Activated CD4-positive, alpha-beta memory T cell treated with anti-CD3 and anti-CD28 coated beads, Interleukin-2, amount 10 ng/mL, durations not matched to agents 7 days and 5 days (primary cell): ENCODE measurements at regions of chr3 and their contacts with region 1.

Region 1: GRCh38 chr3:10242182-10243065 is 5.8 kb upstream of the TATDN2 start:
- DNase-seq: peak; percentile 89
- H3K4me3 Mint-ChIP-seq: peak overlapping the region; percentile 39
- H3K27ac Mint-ChIP-seq: peak overlapping the region; percentile 95
- H3K4me1 Mint-ChIP-seq: peaks cover 62% of the 10 kb centered on the region
- H3K27me3 Mint-ChIP-seq: no peaks in the 10 kb centered on the region

Region 2: GRCh38 chr3:9615003-9615625 is 627.3 kb before region 1 on chr3:
- CTCF ChIA-PET with region 1: no interaction called
- POLR2A ChIA-PET with region 1: no interaction called
- DNase-seq: no peak
- H3K4me3 Mint-ChIP-seq: no peak overlapping the region
- H3K27ac Mint-ChIP-seq: no peak overlapping the region
- H3K4me1 Mint-ChIP-seq: no peaks in the 10 kb centered on the region
- H3K27me3 Mint-ChIP-seq: peaks cover 8% of the 10 kb centered on the region

Region 3: GRCh38 chr3:10122724-10123123 is 119.7 kb before region 1 on chr3:
- CTCF ChIA-PET with region 1: no interaction called
- POLR2A ChIA-PET with region 1: no interaction called
- DNase-seq: no peak
- H3K4me3 Mint-ChIP-seq: no peak overlapping the region
- H3K27ac Mint-ChIP-seq: peak overlapping the region; percentile 1
- H3K4me1 Mint-ChIP-seq: peaks cover 41% of the 10 kb centered on the region
- H3K27me3 Mint-ChIP-seq: no peaks in the 10 kb centered on the region

Region 4: DNA sequence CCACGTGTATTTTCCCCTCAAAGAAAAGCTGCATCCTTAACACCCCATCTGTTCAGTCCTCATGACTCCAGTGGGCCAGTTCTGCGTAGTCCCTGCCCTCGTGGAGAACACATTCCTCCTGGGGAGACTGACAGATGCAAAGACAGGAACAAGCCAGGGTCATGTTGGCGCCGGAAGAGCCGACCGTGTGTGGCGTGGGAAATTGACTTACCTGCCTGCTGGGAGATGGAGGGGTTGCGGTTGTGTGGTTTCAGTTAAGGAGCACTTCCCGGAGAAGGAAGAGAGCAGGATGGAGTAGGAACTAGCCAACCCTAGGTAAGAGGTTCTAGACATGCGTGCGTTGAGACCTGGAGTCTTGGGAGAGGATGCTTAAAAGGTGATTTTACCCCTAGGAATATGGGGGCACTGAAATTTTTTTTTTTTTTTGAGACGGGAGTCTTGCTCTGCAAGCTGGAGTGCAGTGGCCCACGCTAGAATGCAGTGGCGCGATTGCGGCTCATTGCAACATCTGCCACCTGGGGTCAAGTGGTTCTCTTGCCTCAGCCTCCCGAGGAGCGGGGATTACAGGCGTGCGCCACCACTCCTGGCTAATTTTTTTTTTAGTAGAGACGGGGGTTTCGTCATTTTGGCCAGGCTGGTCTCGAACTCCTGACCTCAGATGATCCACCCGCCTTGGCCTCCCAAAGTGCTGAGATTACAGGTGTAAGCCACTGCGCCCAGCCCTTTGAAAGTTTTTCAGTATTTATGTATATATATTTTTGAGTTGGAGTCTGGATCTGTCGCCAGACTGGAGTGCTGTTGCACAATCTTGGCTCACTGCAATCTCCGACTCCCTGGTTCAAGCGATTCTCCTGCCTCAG is 99.5 kb before region 1 on chr3:
- CTCF ChIA-PET with region 1: no interaction called
- POLR2A ChIA-PET with region 1: interaction called, 14 read pairs
- DNase-seq: peak; percentile 32
- H3K4me3 Mint-ChIP-seq: peak overlapping the region; percentile 85
- H3K27ac Mint-ChIP-seq: peak overlapping the region; percentile 96
- H3K4me1 Mint-ChIP-seq: peaks cover 42% of the 10 kb centered on the region
- H3K27me3 Mint-ChIP-seq: no peaks in the 10 kb centered on the region

Region 5: GRCh38 chr3:10198761-10199649 is 43.4 kb before region 1 on chr3:
- CTCF ChIA-PET with region 1: interaction called, 3 read pairs
- POLR2A ChIA-PET with region 1: interaction called, 22 read pairs
- DNase-seq: peak; percentile 85
- H3K4me3 Mint-ChIP-seq: peak overlapping the region; percentile 31
- H3K27ac Mint-ChIP-seq: peak overlapping the region; percentile 94
- H3K4me1 Mint-ChIP-seq: peaks cover 79% of the 10 kb centered on the region
- H3K27me3 Mint-ChIP-seq: no peaks in the 10 kb centered on the region